ENCODE measurements at regions of chr1 and their contacts with region 1.

Region 1: GRCh38 chr1:91511386-91511785 is 10.7 kb downstream of the CDC7 start:
- DNase-seq: peak; percentile 48
- H3K4me3 ChIP-seq: no peak overlapping the region
- H3K27ac ChIP-seq: no peak overlapping the region
- H3K4me1 ChIP-seq: no peaks in the 10 kb centered on the region
- CTCF ChIP-seq: peak; percentile 81

Region 2: DNA sequence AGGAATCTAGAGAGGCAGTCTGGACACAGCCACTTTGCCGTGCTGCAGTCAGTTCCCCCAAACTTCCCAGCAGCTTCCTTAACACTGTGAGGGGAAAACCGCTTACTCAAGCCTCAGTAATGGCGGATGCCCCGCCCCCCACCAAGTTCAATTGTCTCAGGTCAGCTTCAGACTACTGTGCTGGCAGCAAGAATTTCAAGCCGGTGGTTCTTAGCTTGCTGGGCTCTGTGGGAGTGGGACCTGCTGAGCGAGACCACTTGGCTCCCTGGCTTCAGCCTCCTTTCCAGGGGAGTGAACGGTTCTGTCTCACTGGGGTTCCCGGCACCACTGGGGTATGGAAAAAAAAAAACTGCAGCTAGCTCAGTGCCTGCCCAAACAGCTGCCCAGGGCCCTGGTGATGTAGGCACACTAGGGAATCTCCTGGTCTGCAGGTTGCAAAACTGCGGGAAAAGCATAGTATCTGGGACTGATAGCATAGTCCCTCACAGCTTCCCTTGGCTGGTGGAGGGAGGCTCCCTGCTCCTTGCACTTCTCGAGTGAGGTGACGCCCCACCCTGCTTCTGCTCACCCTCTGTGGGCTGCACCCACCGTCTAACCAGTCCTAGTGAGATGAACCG is 83.1 kb before region 1 on chr1:
- CTCF ChIA-PET with region 1: no interaction called
- POLR2A ChIA-PET with region 1: no interaction called
- intact Hi-C with region 1: no loop called
- DNase-seq: no peak
- H3K4me3 ChIP-seq: no peak overlapping the region
- H3K27ac ChIP-seq: no peak overlapping the region
- H3K4me1 ChIP-seq: no peaks in the 10 kb centered on the region
- CTCF ChIP-seq: no peak

Region 3: GRCh38 chr1:91500756-91501522 is 10.4 kb before region 1 on chr1 and contains the start of gene CDC7:
- CTCF ChIA-PET with region 1: no interaction called
- POLR2A ChIA-PET with region 1: interaction called, 33 read pairs
- intact Hi-C with region 1: no loop called
- DNase-seq: peak; percentile 93
- H3K4me3 ChIP-seq: peak within 1 kb of the TSS; percentile 82
- H3K27ac ChIP-seq: peak within 1 kb of the TSS; percentile 72
- H3K4me1 ChIP-seq: peaks cover 41% of the 10 kb centered on the region
- CTCF ChIP-seq: no peak; the same call in 1 of the 2 replicates
- total RNA-seq, gene CDC7: 28.6 and 35.8 TPM in 2 replicates

Region 4: DNA sequence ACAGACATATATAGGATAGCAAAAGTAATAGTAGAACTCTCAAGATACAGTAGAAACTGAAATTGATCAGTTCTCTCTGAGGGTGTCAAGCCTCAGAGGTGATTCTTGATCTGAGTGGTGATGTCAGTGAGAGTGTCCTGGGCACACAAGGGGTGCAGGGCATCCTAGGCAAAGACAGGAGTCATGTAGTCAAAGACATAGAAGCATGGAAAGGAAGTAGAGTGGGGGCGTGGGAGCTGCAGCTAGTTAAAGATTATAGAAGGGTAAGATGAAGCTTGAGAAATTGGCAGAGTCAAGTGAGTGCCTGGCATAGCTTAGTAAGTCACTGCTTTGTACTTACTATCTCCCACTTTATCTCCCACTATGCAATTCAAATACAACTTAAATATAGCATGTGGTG is 12.1 kb after region 1 on chr1:
- CTCF ChIA-PET with region 1: interaction called, 4 read pairs
- POLR2A ChIA-PET with region 1: interaction called, 22 read pairs
- intact Hi-C with region 1: no loop called
- DNase-seq: no peak
- H3K4me3 ChIP-seq: no peak overlapping the region
- H3K27ac ChIP-seq: no peak overlapping the region
- H3K4me1 ChIP-seq: no peaks in the 10 kb centered on the region
- CTCF ChIP-seq: no peak

Region 5: GRCh38 chr1:91929250-91929649 is 417.9 kb after region 1 on chr1:
- CTCF ChIA-PET with region 1: no interaction called
- POLR2A ChIA-PET with region 1: no interaction called
- intact Hi-C with region 1: loop called (anchors 5 kb)
- DNase-seq: no peak
- H3K4me3 ChIP-seq: no peak overlapping the region
- H3K27ac ChIP-seq: no peak overlapping the region
- H3K4me1 ChIP-seq: no peaks in the 10 kb centered on the region
- CTCF ChIP-seq: no peak